PC-3 (cell line): ENCODE measurements at regions of chr3 and their contacts with region 1.

Region 1: GRCh38 chr3:150414258-150414657 is 6.2 kb downstream of the TSC22D2 start:
- DNase-seq: peak; percentile 67
- ATAC-seq: no peak; the same call in 1 of the 2 replicates
- H3K4me3 ChIP-seq: peak overlapping the region; percentile 87
- H3K27ac ChIP-seq: peak overlapping the region; percentile 65
- H3K4me1 ChIP-seq: peaks cover 49% of the 10 kb centered on the region
- H3K27me3 ChIP-seq: no peaks in the 10 kb centered on the region
- CTCF ChIP-seq: no peak

Region 2: DNA sequence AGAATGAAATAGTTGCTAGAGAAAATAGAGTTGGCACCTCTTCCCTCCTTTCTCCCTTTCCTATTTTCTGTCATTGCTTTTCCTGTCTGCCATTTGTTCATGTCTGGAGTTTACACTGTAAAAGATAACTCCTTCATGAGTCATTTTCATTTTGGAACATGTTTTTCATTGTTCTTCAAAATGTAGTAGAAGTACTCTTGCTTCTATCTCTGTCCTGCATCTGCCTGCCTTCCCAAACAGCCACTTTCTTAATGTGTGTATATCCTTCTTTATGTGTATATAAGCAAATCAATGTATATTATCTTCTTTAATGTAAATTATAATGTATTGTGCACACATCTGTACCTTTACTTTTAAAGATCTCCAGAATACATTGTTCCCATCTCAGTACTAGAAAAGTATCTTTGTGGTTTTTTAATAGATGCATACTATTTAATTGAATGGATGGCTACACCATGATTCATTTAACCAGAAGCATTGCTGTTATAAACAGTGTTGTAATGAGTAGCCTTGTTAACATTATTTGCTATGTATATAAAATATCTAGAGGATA is 35.0 kb after region 1 on chr3:
- CTCF ChIA-PET with region 1: no interaction called
- POLR2A ChIA-PET with region 1: no interaction called
- intact Hi-C with region 1: loop called (anchors 2 kb)
- DNase-seq: peak; percentile 80
- ATAC-seq: peak; percentile 65
- H3K4me3 ChIP-seq: 0 out of 2 replicates have a peak overlapping the region, but pooled peaks have one; percentile 37
- H3K27ac ChIP-seq: peak overlapping the region; percentile 69
- H3K4me1 ChIP-seq: peaks cover 65% of the 10 kb centered on the region
- H3K27me3 ChIP-seq: no peaks in the 10 kb centered on the region
- CTCF ChIP-seq: no peak

Region 3: GRCh38 chr3:150462108-150462507 is 47.9 kb after region 1 on chr3:
- CTCF ChIA-PET with region 1: interaction called, 4 read pairs
- POLR2A ChIA-PET with region 1: interaction called, 5 read pairs
- intact Hi-C with region 1: loop called (anchors 2 kb)
- DNase-seq: no peak
- ATAC-seq: no peak
- H3K4me3 ChIP-seq: no peak overlapping the region
- H3K27ac ChIP-seq: peak overlapping the region; percentile 60; the same call in 1 of the 2 replicates
- H3K4me1 ChIP-seq: peaks cover 33% of the 10 kb centered on the region
- H3K27me3 ChIP-seq: no peaks in the 10 kb centered on the region
- CTCF ChIP-seq: no peak

Region 4: GRCh38 chr3:150469031-150469942 is 55.0 kb after region 1 on chr3:
- CTCF ChIA-PET with region 1: interaction called, 4 read pairs
- POLR2A ChIA-PET with region 1: interaction called, 9 read pairs
- intact Hi-C with region 1: loop called (anchors 1 kb)
- DNase-seq: peak; percentile 98
- ATAC-seq: peak; percentile 84
- H3K4me3 ChIP-seq: peak overlapping the region; percentile 64
- H3K27ac ChIP-seq: peak overlapping the region; percentile 99
- H3K4me1 ChIP-seq: peaks cover 38% of the 10 kb centered on the region
- H3K27me3 ChIP-seq: no peaks in the 10 kb centered on the region
- CTCF ChIP-seq: no peak